Mammary epithelial cell (primary cell): ENCODE measurements at regions of chr1 and their contacts with region 1.

Region 1: GRCh38 chr1:177948336-177948972 is 21.4 kb downstream of the SEC16B start:
- DNase-seq: peak; percentile 58
- H3K4me3 ChIP-seq: no peak overlapping the region
- H3K27ac ChIP-seq: no peak overlapping the region
- H3K4me1 ChIP-seq: peaks cover 9% of the 10 kb centered on the region
- H3K27me3 ChIP-seq: no peaks in the 10 kb centered on the region
- CTCF ChIP-seq: peak; percentile 94 to 96

Region 2: GRCh38 chr1:176897350-176898236 is 1050.9 kb before region 1 on chr1:
- CTCF ChIA-PET with region 1: no interaction called
- dilution Hi-C with region 1: no loop called
- in situ Hi-C with region 1: loop called (anchors 10 kb)
- intact Hi-C with region 1: loop called (anchors 1 kb)
- DNase-seq: peak; percentile 37
- H3K4me3 ChIP-seq: peak overlapping the region; percentile 11 to 26 (median 21)
- H3K27ac ChIP-seq: no peak overlapping the region
- H3K4me1 ChIP-seq: peaks cover 6% of the 10 kb centered on the region
- H3K27me3 ChIP-seq: no peaks in the 10 kb centered on the region
- CTCF ChIP-seq: peak; percentile 76 to 90

Region 3: GRCh38 chr1:177256153-177257075 is 692.0 kb before region 1 on chr1:
- CTCF ChIA-PET with region 1: interaction called, 3 read pairs
- dilution Hi-C with region 1: no loop called
- in situ Hi-C with region 1: no loop called
- intact Hi-C with region 1: loop called (anchors 10 kb)
- DNase-seq: peak; percentile 93
- H3K4me3 ChIP-seq: no peak overlapping the region
- H3K27ac ChIP-seq: peak overlapping the region; percentile 73
- H3K4me1 ChIP-seq: peaks cover 26% of the 10 kb centered on the region
- H3K27me3 ChIP-seq: no peaks in the 10 kb centered on the region
- CTCF ChIP-seq: peak; percentile 62 to 66

Region 4: DNA sequence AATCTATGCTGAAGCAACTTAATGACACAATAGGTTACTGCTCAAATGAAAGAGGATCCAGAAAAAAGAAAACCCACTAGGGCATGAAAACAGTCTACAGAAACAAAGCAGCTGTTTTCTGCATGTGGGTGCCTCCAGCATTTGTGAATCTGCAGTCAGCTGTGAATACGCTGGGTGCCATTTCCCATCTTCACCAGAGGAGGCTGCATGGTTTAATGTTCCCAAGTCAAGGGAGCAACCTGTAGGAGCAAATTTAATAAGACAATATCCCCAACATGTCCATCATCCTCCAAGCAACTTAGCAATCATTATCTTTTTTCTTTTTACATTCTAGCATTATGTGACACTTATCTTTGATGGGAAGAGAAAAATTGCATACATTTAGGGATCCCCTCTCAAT is 381.0 kb before region 1 on chr1:
- CTCF ChIA-PET with region 1: no interaction called
- dilution Hi-C with region 1: no loop called
- in situ Hi-C with region 1: no loop called
- intact Hi-C with region 1: loop called (anchors 2 kb)
- DNase-seq: peak; percentile 23
- H3K4me3 ChIP-seq: no peak overlapping the region
- H3K27ac ChIP-seq: no peak overlapping the region
- H3K4me1 ChIP-seq: no peaks in the 10 kb centered on the region
- H3K27me3 ChIP-seq: no peaks in the 10 kb centered on the region
- CTCF ChIP-seq: peak; percentile 55 to 73

Region 5: GRCh38 chr1:177858332-177858821 is 90.1 kb before region 1 on chr1:
- CTCF ChIA-PET with region 1: no interaction called
- dilution Hi-C with region 1: no loop called
- in situ Hi-C with region 1: no loop called
- intact Hi-C with region 1: loop called (anchors 1 kb)
- DNase-seq: no peak
- H3K4me3 ChIP-seq: no peak overlapping the region
- H3K27ac ChIP-seq: no peak overlapping the region
- H3K4me1 ChIP-seq: peaks cover 3% of the 10 kb centered on the region
- H3K27me3 ChIP-seq: no peaks in the 10 kb centered on the region
- CTCF ChIP-seq: no peak